Transverse colon (tissue), 4 donors: ENCODE measurements at regions of chr19 and their contacts with region 1.

Region 1: DNA sequence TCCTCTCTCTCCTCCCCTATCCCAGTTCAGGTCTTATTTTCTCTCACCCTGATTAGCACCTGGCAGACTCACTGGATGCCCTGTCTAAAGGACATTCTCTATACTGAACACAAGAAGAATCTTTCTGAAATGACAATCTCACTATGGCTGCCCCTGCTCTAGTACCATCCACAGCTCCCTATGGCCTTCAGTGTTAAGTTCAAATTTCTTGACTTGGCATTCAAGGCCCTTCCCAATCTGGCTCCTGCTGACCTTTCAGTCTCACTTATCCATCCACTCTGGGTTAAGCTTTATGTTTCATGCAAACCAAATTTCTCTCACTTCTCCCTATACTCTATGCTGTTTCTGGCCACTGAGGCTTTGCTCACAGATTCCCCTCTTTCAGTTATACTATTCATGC is 34.2 kb downstream of the MBD3L1 start:
- DNase-seq: no peak
- H3K4me3 ChIP-seq: no peak overlapping the region
- H3K27ac ChIP-seq: no peak overlapping the region
- H3K4me1 ChIP-seq: no peaks in the 10 kb centered on the region
- H3K27me3 ChIP-seq: no peaks in the 10 kb centered on the region
- CTCF ChIP-seq: no peak
- EP300 ChIP-seq: no peak
- POLR2A ChIP-seq: no peak

Region 2: DNA sequence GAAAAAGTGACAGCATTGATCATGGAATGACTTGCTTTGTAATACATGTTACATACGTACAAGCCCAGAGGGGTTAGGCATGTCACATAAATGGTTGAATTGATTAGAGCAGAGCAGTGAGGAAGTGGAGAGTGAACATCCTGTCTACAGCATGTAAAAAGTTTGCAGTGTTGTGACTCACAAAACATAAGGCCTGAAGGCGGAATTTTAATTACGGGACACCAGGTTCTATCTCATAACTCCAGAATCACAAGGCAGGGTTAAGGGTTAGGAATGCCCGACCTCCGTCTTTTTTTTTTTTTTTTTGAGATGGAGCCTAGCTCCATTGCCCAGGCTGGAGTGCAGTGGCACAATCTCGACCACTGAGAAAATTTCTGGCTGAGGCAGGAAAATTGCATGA is 60.0 kb after region 1 on chr19:
- in situ Hi-C with region 1: no loop called
- intact Hi-C with region 1: loop called (anchors 2 kb)
- DNase-seq: no peak
- H3K4me3 ChIP-seq: no peak overlapping the region
- H3K27ac ChIP-seq: no peak overlapping the region
- H3K4me1 ChIP-seq: no peaks in the 10 kb centered on the region
- H3K27me3 ChIP-seq: no peaks in the 10 kb centered on the region
- CTCF ChIP-seq: no peak
- EP300 ChIP-seq: no peak
- POLR2A ChIP-seq: no peak